ENCODE measurements at regions of chr5 and their contacts with region 1.

Region 1: DNA sequence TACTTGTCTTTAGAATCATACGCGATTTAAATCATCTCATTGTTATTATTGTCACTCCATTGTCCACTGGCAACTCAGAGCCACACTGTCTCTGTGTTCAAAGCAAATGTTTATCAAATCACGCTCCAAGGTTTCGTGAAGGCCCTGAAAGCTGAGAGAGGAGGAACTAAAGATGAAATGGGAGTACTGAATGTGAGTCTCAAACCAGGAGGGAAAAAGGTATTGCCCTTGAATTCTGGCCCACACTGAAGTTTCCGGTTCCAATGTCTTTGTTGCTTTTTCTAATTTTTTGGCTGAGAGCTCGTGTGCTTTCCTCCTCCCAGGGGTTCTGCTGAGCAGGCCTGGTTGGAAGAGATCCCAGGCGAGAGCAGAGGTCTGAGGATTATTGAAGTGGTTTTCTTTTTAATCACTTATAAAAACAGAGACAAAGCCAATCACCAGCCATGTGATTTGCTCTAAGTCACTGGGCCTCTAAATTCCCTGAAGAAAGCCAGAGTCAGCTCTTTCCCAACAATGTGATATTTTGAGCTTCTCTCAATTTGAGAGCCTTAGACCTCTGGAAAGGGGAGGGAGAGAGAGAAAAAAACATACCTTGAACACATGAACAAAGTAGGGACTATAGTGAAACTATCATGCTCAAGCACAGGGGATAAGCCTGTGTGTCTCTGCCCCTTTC is 420.8 kb upstream of the GRAMD2B start:
- DNase-seq: peak; percentile 52 to 83
- ATAC-seq: peak; percentile 91 to 98 (median 96)
- H3K4me3 ChIP-seq: no peak overlapping the region
- H3K27ac ChIP-seq: peak overlapping the region; percentile 15 to 81 (median 58)
- H3K4me1 ChIP-seq: peaks cover 5 to 47% (median 31%) of the 10 kb centered on the region in 9 donors
- H3K27me3 ChIP-seq: no peaks in the 10 kb centered on the region
- CTCF ChIP-seq: no peak

Region 2: GRCh38 chr5:125883223-125883622 is 119.1 kb before region 1 on chr5:
- intact Hi-C with region 1: no loop called
- DNase-seq: no peak
- ATAC-seq: no peak
- H3K4me3 ChIP-seq: no peak overlapping the region
- H3K27ac ChIP-seq: no peak overlapping the region
- H3K4me1 ChIP-seq: no peaks in the 10 kb centered on the region
- H3K27me3 ChIP-seq: no peaks in the 10 kb centered on the region
- CTCF ChIP-seq: no peak

Region 3: DNA sequence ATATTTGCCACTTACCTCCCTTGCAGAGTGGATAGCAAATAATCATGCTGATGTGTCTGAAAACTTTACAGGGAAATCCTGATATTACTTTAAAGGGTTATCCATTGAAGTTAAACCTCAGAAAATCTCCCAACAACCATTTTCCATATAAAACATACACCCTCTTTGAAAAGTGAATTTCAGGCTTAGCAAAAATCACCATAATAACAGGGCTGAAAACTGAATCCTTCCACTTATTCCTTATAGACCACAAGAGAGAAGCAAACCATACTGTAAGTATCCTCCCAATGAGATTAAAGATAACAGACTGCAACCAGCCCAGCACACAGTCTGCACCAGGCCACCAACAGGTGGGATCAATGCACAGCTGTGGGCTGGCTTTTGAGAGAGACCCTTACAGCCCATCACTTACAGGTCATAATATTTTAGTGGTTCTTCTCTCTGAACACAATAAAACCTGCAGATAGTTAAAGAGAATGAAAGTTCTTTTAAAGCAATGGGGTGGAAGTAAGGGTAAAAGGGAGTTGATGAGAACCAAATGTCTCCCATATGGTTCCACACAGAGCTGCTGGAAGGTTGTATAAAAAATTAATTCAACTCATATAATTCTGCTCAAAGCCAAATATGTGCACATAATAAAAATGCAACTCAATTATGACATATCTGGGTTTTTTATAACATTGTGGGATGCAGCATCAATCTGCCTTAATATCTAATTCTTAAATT is 44.6 kb after region 1 on chr5:
- intact Hi-C with region 1: loop called in 1 of 10 experiments (anchors 5 kb)
- DNase-seq: no peak
- ATAC-seq: no peak
- H3K4me3 ChIP-seq: no peak overlapping the region
- H3K27ac ChIP-seq: no peak overlapping the region
- H3K4me1 ChIP-seq: peaks cover 0 to 22% (median 0%) of the 10 kb centered on the region in 9 donors
- H3K27me3 ChIP-seq: no peaks in the 10 kb centered on the region
- CTCF ChIP-seq: no peak